AG04449 (cell line): ENCODE measurements at regions of chr2 and their contacts with region 1.

Region 1: GRCh38 chr2:38274286-38275276 is 102.5 kb downstream of the ATL2 start:
- DNase-seq: peak; percentile 37
- H3K4me3 ChIP-seq: no peak overlapping the region
- CTCF ChIP-seq: peak; percentile 40

Region 2: DNA sequence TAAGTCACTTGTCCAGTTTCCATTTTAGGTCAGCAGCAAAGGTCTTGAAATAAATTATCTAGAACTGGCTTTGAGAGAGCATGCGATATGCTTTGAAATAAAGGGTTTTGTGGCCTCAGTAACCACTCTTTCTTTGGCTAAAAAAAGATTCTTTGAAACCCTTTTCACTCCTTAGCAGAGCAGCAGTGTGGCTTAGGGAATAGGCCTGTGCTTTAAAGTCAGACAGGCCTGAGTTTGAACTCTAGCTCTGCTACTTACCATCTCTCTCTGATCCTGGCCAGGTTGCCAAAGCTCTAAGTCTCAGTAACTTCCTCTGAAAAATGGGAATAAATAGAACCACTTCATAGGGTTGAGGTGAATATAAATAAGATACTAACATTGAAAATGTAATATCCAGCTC is 877.4 kb before region 1 on chr2:
- CTCF ChIA-PET with region 1: interaction called, 12 read pairs
- POLR2A ChIA-PET with region 1: no interaction called
- DNase-seq: no peak
- H3K4me3 ChIP-seq: no peak overlapping the region
- CTCF ChIP-seq: no peak

Region 3: DNA sequence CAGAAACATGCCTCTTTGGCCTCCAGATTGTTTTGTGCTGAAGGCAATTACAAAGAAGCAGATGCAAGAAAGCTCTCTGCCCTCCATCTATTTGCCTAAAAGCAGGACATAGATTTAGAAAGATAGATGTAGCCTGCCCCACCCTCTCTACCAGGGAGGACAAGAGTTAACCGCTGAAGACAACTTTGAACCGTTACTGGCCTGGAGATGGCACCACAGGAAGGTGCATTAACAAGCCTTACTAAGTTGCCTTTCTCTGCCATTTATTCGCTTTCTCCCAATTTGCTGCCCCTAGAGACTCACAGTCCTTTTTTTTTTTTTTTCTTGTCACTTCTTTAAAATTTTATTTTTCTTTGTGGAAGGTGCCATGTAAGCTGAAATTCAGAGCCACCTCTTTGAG is 378.3 kb before region 1 on chr2:
- CTCF ChIA-PET with region 1: interaction called, 22 read pairs
- POLR2A ChIA-PET with region 1: interaction called, 3 read pairs
- DNase-seq: no peak
- H3K4me3 ChIP-seq: no peak overlapping the region
- CTCF ChIP-seq: no peak

Region 4: DNA sequence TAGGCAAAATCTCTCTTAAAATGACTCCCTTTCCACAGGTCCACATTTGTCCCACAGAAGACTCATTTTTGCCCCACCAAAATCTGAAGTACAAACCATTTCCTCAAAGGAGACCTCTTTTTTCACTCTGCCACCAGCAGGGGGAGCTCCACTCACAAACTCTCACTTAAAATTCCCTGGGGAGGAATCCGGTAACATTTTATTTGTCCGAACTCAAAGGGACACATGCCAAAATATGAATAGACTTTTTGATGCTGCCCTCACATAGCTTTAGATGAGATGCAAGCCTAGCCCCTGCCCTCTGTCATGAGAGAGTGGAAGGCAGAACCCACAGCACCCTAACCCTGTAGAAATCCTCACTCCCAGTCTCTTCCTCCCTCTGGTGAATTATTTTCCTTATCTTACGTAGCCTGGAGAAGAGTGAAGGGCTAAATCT is 292.4 kb before region 1 on chr2:
- CTCF ChIA-PET with region 1: interaction called, 100 read pairs
- POLR2A ChIA-PET with region 1: no interaction called
- DNase-seq: no peak
- H3K4me3 ChIP-seq: peak overlapping the region; percentile 16
- CTCF ChIP-seq: peak; percentile 54

Region 5: DNA sequence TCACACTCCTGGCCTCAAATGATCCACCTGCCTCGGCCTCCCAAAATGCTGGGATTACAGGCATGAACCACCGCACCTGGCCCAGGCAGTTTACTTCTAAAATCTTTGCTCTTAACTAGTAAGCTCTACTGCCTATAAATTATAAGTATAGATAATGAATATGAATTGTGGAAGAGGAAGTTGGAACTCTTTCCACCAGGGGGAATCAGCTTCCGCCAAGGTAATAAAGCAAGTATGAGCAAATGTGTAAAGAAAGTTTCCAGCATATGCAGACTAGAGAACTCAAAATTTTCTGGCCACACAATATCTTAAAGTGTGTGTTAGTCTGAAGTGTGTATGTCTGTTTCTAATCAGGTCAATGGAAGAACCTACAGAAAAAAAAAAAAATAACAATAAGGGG is 281.4 kb before region 1 on chr2:
- CTCF ChIA-PET with region 1: interaction called, 19 read pairs
- POLR2A ChIA-PET with region 1: no interaction called
- DNase-seq: no peak
- H3K4me3 ChIP-seq: no peak overlapping the region
- CTCF ChIP-seq: no peak

Region 6: DNA sequence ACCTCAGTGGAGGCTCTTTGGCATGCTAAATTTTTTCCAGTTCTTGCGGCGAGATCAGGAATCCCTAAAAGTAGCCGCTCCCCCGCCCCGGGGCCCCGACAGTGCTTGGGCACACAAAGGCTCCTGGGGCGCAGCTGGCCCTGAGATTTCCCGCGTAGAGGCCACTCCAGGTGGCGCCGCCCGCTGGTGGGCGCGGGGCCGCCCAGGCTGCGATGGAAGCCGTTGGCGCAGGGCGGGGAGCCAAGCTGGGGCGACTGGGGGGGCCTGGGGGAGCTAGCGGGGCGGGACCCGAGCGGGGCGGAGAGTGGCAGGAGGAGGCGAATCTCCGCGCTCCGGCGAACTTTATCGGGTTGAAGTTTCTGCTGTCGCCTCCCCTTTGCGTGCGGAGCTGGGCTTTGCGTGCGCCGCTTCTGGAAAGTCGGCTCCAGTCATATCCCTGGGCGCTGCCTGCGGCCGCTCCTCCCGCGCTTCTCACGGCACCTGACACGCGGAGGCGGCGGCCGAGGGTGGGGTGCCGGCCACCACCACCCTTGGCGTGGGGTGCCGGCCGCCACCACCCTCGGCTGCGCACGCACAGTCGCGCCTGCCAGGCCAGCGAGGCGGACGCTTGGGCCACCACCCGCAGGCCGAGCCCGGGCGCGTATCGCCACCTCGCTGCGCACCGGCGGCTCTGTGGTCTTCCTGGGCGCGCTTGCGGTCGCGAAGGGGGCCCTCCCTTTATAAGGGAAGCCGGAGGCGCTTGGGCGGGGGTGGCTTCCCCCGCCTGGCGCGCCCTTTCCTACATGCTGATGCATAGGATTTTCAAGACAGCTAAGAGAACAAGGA is 197.8 kb before region 1 on chr2:
- CTCF ChIA-PET with region 1: interaction called, 16 read pairs
- POLR2A ChIA-PET with region 1: interaction called, 6 read pairs
- DNase-seq: no peak
- H3K4me3 ChIP-seq: peak overlapping the region; percentile 50
- CTCF ChIP-seq: peak; percentile 46

Region 7: GRCh38 chr2:38115216-38116032 is 159.2 kb before region 1 on chr2:
- CTCF ChIA-PET with region 1: interaction called, 21 read pairs
- POLR2A ChIA-PET with region 1: no interaction called
- DNase-seq: no peak
- H3K4me3 ChIP-seq: no peak overlapping the region
- CTCF ChIP-seq: peak; percentile 82

Region 8: GRCh38 chr2:38323623-38324022 is 49.0 kb after region 1 on chr2:
- CTCF ChIA-PET with region 1: no interaction called
- POLR2A ChIA-PET with region 1: no interaction called
- DNase-seq: no peak
- H3K4me3 ChIP-seq: no peak overlapping the region
- CTCF ChIP-seq: no peak